ENCODE measurements at regions of chr19 and their contacts with region 1.

Region 1: DNA sequence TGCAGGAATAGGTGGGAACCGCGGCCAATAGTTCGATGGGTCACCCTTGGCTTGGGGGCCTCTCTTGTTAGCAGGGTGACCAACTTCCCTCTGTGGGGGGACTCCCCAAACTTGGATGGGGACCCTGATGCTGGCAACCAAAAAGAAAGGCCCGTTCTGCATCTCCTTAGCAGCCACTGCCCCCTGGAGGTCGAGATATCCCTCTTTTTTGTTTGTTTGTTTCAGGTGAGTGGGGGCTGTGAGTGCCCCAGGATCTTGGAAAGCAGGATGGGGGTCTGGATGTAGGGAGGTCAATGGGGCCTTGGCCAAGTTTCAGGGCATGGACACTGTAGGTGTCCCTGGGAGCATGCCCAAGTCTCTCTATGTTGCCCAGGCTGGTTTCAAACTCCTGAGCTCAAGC is 7.7 kb upstream of the CRTC1 start:
- DNase-seq: no peak
- ATAC-seq: no peak

Region 2: GRCh38 chr19:18562086-18562485 is 113.7 kb before region 1 on chr19:
- intact Hi-C with region 1: no loop called
- DNase-seq: no peak
- ATAC-seq: peak; percentile 5

Region 3: GRCh38 chr19:18589380-18590272 is 86.2 kb before region 1 on chr19:
- intact Hi-C with region 1: loop called (anchors 10 kb)
- DNase-seq: peak; percentile 82
- ATAC-seq: peak; percentile 60

Measured in sciatic nerve (tissue), 2 donors.